Keratinocyte (primary cell): ENCODE measurements at regions of chr2 and their contacts with region 1.

Region 1: DNA sequence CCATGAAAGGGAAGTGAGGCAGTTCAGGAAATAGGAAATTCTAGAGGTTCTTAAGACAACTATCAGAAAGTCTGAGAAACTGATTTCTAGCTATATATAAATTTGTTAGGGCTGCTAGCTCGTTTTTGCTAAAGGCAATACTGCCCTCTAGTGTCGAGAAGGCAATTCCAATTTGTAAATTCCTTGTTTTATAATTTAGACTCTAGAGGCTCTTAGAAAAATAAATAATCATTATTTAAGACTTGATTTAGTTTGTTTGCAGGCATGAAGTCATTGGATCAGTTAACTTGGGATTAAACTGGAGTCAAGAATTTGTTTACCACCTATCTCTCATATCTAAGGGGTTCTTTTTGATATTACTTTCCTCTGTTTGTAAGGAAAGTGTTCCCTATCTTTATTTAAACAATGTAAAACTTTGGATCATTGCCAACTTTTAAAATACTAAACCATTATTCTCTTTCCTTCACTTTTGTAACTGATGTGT is 66.2 kb downstream of the ACVR2A start:
- DNase-seq: peak; percentile 1
- H3K4me3 ChIP-seq: no peak overlapping the region
- H3K27ac ChIP-seq: no peak overlapping the region
- H3K4me1 ChIP-seq: peaks cover 4% of the 10 kb centered on the region
- H3K27me3 ChIP-seq: no peaks in the 10 kb centered on the region
- CTCF ChIP-seq: peak in 2 of 3 experiments; percentile 44 to 45

Region 2: GRCh38 chr2:147045113-147045512 is 865.9 kb before region 1 on chr2:
- dilution Hi-C with region 1: loop called (anchors 25 kb)
- DNase-seq: no peak
- H3K4me3 ChIP-seq: no peak overlapping the region
- H3K27ac ChIP-seq: no peak overlapping the region
- H3K4me1 ChIP-seq: no peaks in the 10 kb centered on the region
- H3K27me3 ChIP-seq: no peaks in the 10 kb centered on the region
- CTCF ChIP-seq: peak; percentile 59 to 69 (median 62)

Region 3: GRCh38 chr2:147945660-147946059 is 34.6 kb after region 1 on chr2:
- dilution Hi-C with region 1: no loop called
- DNase-seq: no peak
- H3K4me3 ChIP-seq: no peak overlapping the region
- H3K27ac ChIP-seq: no peak overlapping the region
- H3K4me1 ChIP-seq: no peaks in the 10 kb centered on the region
- H3K27me3 ChIP-seq: no peaks in the 10 kb centered on the region
- CTCF ChIP-seq: no peak